Caco-2 (cell line): ENCODE measurements at regions of chr5 and their contacts with region 1.

Region 1: DNA sequence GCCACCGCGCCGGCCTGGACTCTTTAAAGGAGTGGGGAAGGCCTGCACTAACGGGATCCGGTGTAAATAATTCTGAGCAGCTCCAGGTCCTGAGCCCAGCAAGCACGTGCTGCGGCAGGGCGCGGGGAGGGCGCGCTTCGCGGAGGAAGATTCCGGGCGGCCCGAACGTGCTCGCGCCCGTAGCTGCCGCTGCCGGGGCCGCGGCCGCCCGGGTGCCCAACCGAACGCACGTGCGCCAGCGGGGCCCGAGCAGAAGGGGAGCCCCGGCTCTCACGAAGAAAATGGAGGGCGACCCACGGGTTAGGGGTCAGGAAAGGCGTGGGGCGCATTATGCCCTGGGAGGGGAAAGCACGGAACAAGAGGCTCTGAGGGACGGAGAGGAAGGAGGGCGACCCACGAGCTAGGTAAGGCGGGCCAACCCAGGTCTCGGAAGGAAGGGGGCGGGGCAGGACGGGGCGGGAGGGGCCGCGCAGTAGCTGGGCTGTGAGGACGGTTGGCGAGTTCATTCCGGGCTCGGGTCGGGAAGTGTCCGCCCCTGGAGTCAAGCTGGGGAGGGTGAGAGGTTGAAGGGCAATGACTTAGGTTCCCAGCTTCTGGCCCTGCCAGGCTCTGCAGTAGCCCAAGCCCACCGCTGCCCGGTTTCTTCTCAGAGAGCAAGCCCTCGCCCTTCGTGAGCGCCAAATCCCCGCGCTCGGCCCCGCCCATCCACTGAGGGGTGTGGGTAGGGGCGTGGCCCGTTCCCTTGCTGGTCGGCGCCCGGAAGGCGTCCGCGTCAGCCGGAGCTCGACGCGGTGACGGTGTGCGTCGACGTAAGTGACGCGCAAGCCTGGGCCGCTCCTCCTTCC is at the start of gene ZNF131:
- DNase-seq: peak; percentile 95 to 97
- H3K4me3 ChIP-seq: peak within 1 kb of the TSS; percentile 90
- H3K4me3 Mint-ChIP-seq: peak within 1 kb of the TSS; percentile 93
- H3K27ac Mint-ChIP-seq: peak within 1 kb of the TSS; percentile 95
- H3K4me1 ChIP-seq: peaks cover 21% of the 10 kb centered on the region
- H3K4me1 Mint-ChIP-seq: peaks cover 12% of the 10 kb centered on the region
- H3K27me3 ChIP-seq: no peaks in the 10 kb centered on the region
- H3K27me3 Mint-ChIP-seq: peaks cover 3% of the 10 kb centered on the region
- CTCF ChIP-seq: no peak
- total RNA-seq, gene ZNF131: 53.6 and 53.7 TPM in 2 replicates

Region 2: DNA sequence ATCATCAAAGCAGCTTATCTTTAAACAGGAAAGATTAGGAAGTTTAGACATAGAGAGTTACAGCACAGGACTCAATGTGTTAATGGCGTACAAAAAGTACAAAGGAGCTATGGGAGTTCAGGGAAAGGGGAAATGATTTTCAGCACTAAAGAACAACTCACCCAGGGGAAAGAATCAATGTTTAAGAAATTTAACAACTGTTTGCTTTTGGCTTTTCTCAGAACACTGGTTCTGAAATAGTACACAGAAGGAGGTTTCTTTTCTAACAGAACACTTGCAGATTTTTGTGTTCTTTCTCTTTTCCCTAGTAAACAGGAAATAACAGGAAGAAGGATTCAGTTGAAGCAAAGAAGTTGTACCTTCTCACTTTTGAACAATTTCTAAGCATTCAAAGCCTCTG is 769.0 kb before region 1 on chr5:
- CTCF ChIA-PET with region 1: no interaction called
- POLR2A ChIA-PET with region 1: no interaction called
- intact Hi-C with region 1: no loop called
- DNase-seq: no peak
- H3K4me3 ChIP-seq: no peak overlapping the region
- H3K4me3 Mint-ChIP-seq: no peak overlapping the region
- H3K27ac Mint-ChIP-seq: no peak overlapping the region
- H3K4me1 ChIP-seq: no peaks in the 10 kb centered on the region
- H3K4me1 Mint-ChIP-seq: no peaks in the 10 kb centered on the region
- H3K27me3 ChIP-seq: no peaks in the 10 kb centered on the region
- H3K27me3 Mint-ChIP-seq: no peaks in the 10 kb centered on the region
- CTCF ChIP-seq: no peak

Region 3: DNA sequence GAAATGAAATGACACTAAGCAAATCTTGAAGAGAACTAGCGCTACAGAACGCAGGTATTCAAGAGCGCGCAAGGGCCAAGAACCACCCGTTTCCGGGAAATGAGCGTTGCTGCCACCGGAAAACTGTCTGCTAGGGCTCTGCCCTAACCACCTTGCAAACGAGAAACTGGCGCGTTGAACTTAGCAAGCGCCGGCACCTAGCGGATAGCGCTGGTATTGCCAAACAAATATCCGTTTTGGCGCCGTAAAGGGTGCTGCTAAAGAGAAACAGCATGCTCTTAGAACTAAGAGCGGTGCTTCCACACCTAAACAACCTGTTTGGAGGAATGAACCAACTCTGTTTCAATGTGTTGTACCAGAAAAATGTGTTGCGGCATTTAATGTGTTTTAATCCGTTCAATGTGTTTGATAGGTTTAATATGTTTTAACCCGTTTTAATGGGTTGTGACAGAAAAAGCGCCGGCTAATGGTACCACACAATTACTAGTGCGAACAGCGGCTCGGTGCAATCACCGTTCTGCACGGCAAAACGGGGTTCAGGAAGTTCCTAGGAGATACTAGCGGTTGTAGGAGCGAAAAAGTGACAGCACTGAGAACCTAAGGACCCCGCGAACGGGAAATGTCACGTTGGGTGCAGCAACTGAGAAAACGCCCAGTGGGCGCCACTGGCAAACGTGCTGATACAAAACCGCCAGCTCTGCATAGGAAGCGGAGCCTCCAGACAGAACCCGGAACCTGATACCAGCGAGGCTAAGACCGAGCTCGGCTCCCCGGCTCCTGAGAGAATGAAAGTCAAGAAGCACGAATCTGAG is 80.4 kb before region 1 on chr5 and contains the start of gene ANXA2R:
- CTCF ChIA-PET with region 1: interaction called, 8 read pairs
- POLR2A ChIA-PET with region 1: interaction called, 7 read pairs
- intact Hi-C with region 1: loop called (anchors 1 kb)
- DNase-seq: peak; percentile 92 to 93
- H3K4me3 ChIP-seq: peak within 1 kb of the TSS; percentile 80
- H3K4me3 Mint-ChIP-seq: peak within 1 kb of the TSS; percentile 86
- H3K27ac Mint-ChIP-seq: peak within 1 kb of the TSS; percentile 58
- H3K4me1 ChIP-seq: no peaks in the 10 kb centered on the region
- H3K4me1 Mint-ChIP-seq: no peaks in the 10 kb centered on the region
- H3K27me3 ChIP-seq: no peaks in the 10 kb centered on the region
- H3K27me3 Mint-ChIP-seq: no peaks in the 10 kb centered on the region
- CTCF ChIP-seq: peak; percentile 87 to 88
- total RNA-seq, gene ANXA2R: 3.1 and 4.1 TPM in 2 replicates

Region 4: DNA sequence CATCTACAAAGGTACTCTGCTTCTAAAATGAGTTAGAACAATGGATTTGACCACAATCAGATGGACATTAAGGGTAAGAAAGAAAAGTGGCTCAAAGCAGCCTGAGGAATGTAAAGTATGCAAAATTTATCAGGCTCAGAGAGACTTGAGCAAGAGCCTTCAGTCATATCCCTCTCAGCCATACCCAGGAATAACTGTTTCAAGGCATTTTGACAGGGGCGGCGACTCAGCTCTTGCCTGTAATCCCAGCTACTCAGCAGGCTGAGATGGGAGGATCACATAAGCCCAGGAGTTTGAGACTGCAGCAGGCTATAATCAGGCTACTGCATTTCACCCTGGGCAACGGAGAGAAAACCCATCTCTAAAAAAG is 42.0 kb before region 1 on chr5:
- CTCF ChIA-PET with region 1: no interaction called
- POLR2A ChIA-PET with region 1: interaction called, 12 read pairs
- intact Hi-C with region 1: no loop called
- DNase-seq: peak; percentile 73 to 77
- H3K4me3 ChIP-seq: no peak overlapping the region
- H3K4me3 Mint-ChIP-seq: no peak overlapping the region
- H3K27ac Mint-ChIP-seq: peak overlapping the region; percentile 41
- H3K4me1 ChIP-seq: peaks cover 69% of the 10 kb centered on the region
- H3K4me1 Mint-ChIP-seq: peaks cover 48% of the 10 kb centered on the region
- H3K27me3 ChIP-seq: no peaks in the 10 kb centered on the region
- H3K27me3 Mint-ChIP-seq: no peaks in the 10 kb centered on the region
- CTCF ChIP-seq: no peak

Region 5: GRCh38 chr5:43110606-43111442 is 10.1 kb before region 1 on chr5:
- CTCF ChIA-PET with region 1: interaction called, 30 read pairs
- POLR2A ChIA-PET with region 1: interaction called, 7 read pairs
- intact Hi-C with region 1: no loop called
- DNase-seq: peak; percentile 59 to 72
- H3K4me3 ChIP-seq: no peak overlapping the region
- H3K4me3 Mint-ChIP-seq: no peak overlapping the region
- H3K27ac Mint-ChIP-seq: no peak overlapping the region
- H3K4me1 ChIP-seq: peaks cover 9% of the 10 kb centered on the region; the same call in 1 of the 2 replicates
- H3K4me1 Mint-ChIP-seq: no peaks in the 10 kb centered on the region
- H3K27me3 ChIP-seq: no peaks in the 10 kb centered on the region
- H3K27me3 Mint-ChIP-seq: no peaks in the 10 kb centered on the region
- CTCF ChIP-seq: peak; percentile 61 to 71

Region 6: DNA sequence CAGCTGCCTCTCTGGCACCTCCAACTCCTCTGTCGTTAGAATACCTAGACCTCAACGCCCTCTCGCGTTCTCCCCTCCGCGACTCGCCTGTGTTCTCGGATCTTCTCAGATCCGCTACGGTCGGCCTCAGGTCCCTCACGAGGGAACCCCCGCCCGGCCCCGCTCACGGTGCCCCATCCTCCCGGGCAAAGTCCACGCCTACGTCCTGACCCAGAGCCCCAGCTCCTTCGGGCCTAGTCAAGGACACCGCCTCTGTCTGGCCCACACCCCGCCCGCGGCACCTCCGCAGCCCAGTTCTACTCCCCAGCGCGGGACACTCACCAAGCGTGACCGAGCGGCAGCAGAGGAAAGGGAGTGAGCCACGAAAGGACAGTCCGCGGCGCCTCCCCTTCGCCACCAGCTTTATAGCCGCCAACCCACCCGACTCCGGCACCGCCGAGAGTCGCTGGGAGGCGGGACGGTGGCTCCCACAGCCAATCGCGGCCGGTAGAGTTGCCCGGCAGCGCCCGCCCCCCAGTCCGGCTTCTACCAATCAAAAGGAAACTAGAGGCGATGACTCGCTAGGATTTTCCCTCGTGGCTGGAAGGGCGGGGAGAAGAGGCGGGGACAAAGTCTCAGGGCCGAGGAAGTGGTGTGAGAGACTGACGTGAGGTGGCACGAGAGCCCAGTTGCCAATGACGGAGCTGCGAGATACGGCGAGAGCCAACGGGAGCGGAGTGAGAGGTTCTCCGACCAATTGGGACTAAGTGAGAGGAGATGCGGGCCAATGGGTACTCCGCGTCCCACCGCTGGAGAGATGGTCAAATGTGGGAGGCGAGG is 192.3 kb after region 1 on chr5 and contains the start of gene HMGCS1:
- CTCF ChIA-PET with region 1: no interaction called
- POLR2A ChIA-PET with region 1: interaction called, 19 read pairs
- intact Hi-C with region 1: loop called (anchors 2 kb)
- DNase-seq: peak; percentile 99 to 100
- H3K4me3 ChIP-seq: peak within 1 kb of the TSS; percentile 56
- H3K4me3 Mint-ChIP-seq: peak within 1 kb of the TSS; percentile 99
- H3K27ac Mint-ChIP-seq: peak within 1 kb of the TSS; percentile 83
- H3K4me1 ChIP-seq: peaks cover 49% of the 10 kb centered on the region
- H3K4me1 Mint-ChIP-seq: peaks cover 34% of the 10 kb centered on the region
- H3K27me3 ChIP-seq: no peaks in the 10 kb centered on the region
- H3K27me3 Mint-ChIP-seq: no peaks in the 10 kb centered on the region
- CTCF ChIP-seq: no peak
- total RNA-seq, gene HMGCS1: 205 and 211 TPM in 2 replicates

Region 7: GRCh38 chr5:43484106-43484849 is 363.3 kb after region 1 on chr5:
- CTCF ChIA-PET with region 1: interaction called, 16 read pairs
- POLR2A ChIA-PET with region 1: interaction called, 20 read pairs
- intact Hi-C with region 1: no loop called
- DNase-seq: peak; percentile 83 to 91
- H3K4me3 ChIP-seq: peak overlapping the region; percentile 81
- H3K4me3 Mint-ChIP-seq: peak overlapping the region; percentile 95
- H3K27ac Mint-ChIP-seq: peak overlapping the region; percentile 99
- H3K4me1 ChIP-seq: peaks cover 3% of the 10 kb centered on the region; the same call in 1 of the 2 replicates
- H3K4me1 Mint-ChIP-seq: peaks cover 11% of the 10 kb centered on the region
- H3K27me3 ChIP-seq: no peaks in the 10 kb centered on the region
- H3K27me3 Mint-ChIP-seq: no peaks in the 10 kb centered on the region
- CTCF ChIP-seq: peak; percentile 75 to 82